HEK293T (cell line): ENCODE measurements at regions of chr5 and their contacts with region 1.

Region 1: GRCh38 chr5:180810210-180810958 is 7.8 kb upstream of the MGAT1 start:
- DNase-seq: peak; percentile 96

Region 2: DNA sequence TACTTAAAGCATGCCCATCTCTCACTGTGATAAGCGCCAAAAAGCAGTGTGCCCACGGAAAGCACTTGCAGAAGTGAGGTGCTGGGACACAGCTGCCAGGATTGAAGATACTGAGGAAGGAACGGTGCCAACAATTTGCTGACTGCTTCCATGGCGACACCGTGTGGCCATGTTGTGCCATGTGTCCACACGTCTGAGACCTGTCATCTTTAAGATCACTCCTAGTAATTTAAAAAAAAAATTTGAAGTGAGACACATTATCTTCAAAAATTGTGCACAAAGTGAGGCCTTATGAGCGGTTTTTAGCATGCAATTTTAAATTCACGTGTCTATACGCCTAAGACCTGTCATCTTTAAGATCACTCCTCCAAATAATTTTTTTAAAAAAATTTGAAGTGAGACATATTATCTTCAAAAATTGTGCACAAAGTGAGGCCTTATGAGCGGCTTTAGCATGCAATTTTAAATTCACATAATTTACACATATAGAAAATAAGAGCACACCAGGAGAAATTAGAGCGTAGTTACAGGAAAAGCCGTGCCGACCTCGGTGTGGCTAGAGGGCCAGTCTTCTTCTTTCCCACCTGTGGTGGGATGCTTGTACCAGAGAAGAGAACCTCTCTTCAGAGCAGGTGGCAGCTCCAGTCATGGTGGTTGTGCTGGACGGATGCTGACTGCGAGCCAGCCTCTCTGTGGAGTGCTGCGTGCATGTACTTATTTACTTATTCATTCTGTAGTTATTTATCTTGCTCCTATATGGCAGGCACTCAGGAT is 139.6 kb before region 1 on chr5:
- CTCF ChIA-PET with region 1: no interaction called
- POLR2A ChIA-PET with region 1: no interaction called
- DNase-seq: peak; percentile 71

Region 3: DNA sequence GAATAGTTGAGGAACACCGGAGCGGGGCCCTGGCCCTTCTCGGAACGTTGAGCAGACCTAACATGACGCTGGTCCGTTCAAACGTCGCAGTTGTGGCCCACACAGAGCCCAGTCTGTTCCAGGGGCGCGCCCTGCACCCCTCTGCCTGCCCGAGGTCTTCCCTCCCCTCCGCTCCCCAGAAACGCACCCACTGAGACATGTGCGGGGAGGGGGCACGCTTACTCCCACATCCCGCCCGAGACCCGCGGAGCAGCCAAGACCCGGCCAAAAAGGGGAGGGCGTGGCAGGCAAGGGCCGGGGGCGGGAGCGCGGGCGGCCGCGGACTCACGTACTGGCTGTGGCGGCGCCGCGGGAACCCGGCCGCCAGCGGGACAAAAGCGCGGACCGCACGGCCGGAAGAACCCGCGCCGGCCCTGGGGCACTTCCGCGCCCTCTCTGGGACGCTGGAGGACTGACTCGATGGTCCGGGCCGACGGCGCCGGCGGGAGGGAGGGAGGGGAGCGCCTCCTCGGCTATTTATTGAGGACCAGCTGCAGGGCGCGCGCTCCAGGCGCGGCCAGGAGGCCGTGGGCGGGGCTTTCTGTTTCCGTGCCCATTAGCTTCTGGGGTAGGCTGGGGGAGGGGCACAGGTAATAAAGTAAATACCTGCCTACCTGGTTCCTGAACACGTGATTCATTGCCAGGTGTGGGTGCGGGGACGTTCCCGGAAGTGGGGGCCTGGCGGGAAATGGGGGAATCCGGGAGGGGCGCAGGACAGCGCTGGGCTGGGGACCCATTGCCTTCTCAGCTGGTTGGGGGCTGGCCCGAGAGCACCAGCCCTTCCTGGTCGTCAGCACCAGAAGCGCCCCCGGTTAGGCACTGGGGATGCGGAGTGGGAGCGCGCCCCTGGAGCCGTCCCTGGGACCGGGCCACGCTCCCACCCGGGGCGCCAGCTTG is 50.8 kb after region 1 on chr5 and contains the start of gene ZFP62:
- CTCF ChIA-PET with region 1: no interaction called
- POLR2A ChIA-PET with region 1: interaction called, 20 read pairs
- DNase-seq: peak; percentile 96